ENCODE measurements at regions of chr1 and their contacts with region 1.

Region 1: GRCh38 chr1:24744911-24745710 is at the start of gene CLIC4:
- DNase-seq: peak; percentile 100
- ATAC-seq: peak; percentile 93
- H3K4me3 Mint-ChIP-seq: peak within 1 kb of the TSS; percentile 90
- H3K27ac Mint-ChIP-seq: peak within 1 kb of the TSS; percentile 90
- H3K4me1 Mint-ChIP-seq: peaks cover 44% of the 10 kb centered on the region
- H3K27me3 Mint-ChIP-seq: no peaks in the 10 kb centered on the region
- total RNA-seq, gene CLIC4: 29.8 to 33.1 TPM

Region 2: DNA sequence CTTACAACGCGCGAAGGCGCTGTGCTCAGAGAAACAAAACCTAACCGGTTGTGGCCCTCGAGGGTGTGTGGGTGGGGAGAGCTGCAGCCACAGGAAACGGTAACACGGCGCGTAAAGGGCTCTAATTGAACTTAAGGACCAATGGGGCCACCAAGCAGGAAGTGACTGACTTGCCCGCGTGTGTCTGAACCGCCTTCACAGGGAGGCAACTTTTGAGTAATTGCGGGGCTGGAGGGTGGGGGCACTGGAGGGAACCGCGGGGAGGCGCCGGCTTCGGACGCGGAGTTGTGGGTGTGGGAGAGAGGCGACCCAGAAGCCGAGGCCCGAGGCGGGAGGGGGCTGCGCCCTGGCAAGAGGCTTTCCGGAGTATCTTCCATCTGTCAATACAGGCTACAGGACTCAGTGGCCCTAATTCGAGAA is 786.1 kb before region 1 on chr1:
- CTCF ChIA-PET with region 1: no interaction called
- POLR2A ChIA-PET with region 1: no interaction called
- intact Hi-C with region 1: loop called in 1 of 2 experiments (anchors 1 kb)
- DNase-seq: peak; percentile 97
- ATAC-seq: peak; percentile 82
- H3K4me3 Mint-ChIP-seq: peak overlapping the region; percentile 100
- H3K27ac Mint-ChIP-seq: peak overlapping the region; percentile 100
- H3K4me1 Mint-ChIP-seq: peaks cover 53% of the 10 kb centered on the region
- H3K27me3 Mint-ChIP-seq: no peaks in the 10 kb centered on the region

Region 3: GRCh38 chr1:24415334-24415909 is 329.7 kb before region 1 on chr1 and contains the start of gene NIPAL3:
- CTCF ChIA-PET with region 1: no interaction called
- POLR2A ChIA-PET with region 1: no interaction called
- intact Hi-C with region 1: loop called in 1 of 2 experiments (anchors 1 kb)
- DNase-seq: peak; percentile 99
- ATAC-seq: peak; percentile 94
- H3K4me3 Mint-ChIP-seq: peak within 1 kb of the TSS; percentile 98
- H3K27ac Mint-ChIP-seq: peak within 1 kb of the TSS; percentile 97
- H3K4me1 Mint-ChIP-seq: peaks cover 57% of the 10 kb centered on the region
- H3K27me3 Mint-ChIP-seq: no peaks in the 10 kb centered on the region
- total RNA-seq, gene NIPAL3: 38.1 to 41.4 TPM

Region 4: DNA sequence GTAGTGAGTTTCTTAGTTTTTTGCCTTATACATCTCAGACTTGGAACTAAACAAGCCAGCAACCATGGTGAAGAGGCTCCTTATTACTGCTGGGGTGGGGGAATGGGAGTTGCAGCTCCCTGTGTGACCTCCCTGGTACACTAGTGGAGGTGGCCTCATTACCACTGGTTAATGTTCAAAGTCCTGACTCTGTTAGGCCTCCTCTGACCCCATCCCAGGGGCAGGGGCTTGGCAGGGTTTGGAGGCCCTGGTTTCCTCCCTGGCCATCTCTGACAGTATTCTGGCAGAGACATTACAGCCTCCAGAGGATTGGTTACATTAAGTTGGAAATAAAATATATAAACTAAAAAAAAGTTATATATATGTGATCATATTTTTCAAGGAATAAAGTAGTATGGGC is 45.4 kb after region 1 on chr1:
- CTCF ChIA-PET with region 1: no interaction called
- POLR2A ChIA-PET with region 1: no interaction called
- intact Hi-C with region 1: no loop called
- DNase-seq: no peak
- ATAC-seq: no peak
- H3K4me3 Mint-ChIP-seq: no peak overlapping the region
- H3K27ac Mint-ChIP-seq: no peak overlapping the region
- H3K4me1 Mint-ChIP-seq: no peaks in the 10 kb centered on the region
- H3K27me3 Mint-ChIP-seq: no peaks in the 10 kb centered on the region

Region 5: DNA sequence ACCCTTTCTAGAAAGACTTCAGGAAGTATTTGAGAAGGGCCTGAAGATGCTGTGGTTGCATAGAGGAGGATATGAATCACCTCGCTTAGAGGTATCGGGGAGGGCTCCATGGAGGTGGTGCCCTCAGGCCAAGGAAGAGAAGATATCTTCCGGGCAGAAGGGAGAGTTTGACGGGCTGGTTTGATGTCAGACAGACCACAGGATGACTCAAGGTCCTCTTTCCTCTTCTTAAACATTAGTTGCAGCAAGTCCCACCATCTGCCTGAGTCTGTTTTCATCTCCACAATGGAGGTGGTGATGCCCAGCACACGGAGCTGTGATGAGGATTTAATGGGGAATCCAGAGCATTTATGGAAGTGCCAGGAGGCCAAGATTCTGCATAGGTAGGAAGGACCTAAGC is 210.1 kb after region 1 on chr1:
- CTCF ChIA-PET with region 1: no interaction called
- POLR2A ChIA-PET with region 1: no interaction called
- intact Hi-C with region 1: loop called in 1 of 2 experiments (anchors 1 kb)
- DNase-seq: peak; percentile 89
- ATAC-seq: peak; percentile 85
- H3K4me3 Mint-ChIP-seq: peak overlapping the region; percentile 94
- H3K27ac Mint-ChIP-seq: peak overlapping the region; percentile 99
- H3K4me1 Mint-ChIP-seq: peaks cover 93% of the 10 kb centered on the region
- H3K27me3 Mint-ChIP-seq: no peaks in the 10 kb centered on the region

Region 6: GRCh38 chr1:25054526-25055323 is 309.6 kb after region 1 on chr1:
- CTCF ChIA-PET with region 1: no interaction called
- POLR2A ChIA-PET with region 1: no interaction called
- intact Hi-C with region 1: no loop called
- DNase-seq: no peak
- ATAC-seq: no peak
- H3K4me3 Mint-ChIP-seq: no peak overlapping the region
- H3K27ac Mint-ChIP-seq: no peak overlapping the region
- H3K4me1 Mint-ChIP-seq: no peaks in the 10 kb centered on the region
- H3K27me3 Mint-ChIP-seq: peaks cover 13% of the 10 kb centered on the region

Region 7: DNA sequence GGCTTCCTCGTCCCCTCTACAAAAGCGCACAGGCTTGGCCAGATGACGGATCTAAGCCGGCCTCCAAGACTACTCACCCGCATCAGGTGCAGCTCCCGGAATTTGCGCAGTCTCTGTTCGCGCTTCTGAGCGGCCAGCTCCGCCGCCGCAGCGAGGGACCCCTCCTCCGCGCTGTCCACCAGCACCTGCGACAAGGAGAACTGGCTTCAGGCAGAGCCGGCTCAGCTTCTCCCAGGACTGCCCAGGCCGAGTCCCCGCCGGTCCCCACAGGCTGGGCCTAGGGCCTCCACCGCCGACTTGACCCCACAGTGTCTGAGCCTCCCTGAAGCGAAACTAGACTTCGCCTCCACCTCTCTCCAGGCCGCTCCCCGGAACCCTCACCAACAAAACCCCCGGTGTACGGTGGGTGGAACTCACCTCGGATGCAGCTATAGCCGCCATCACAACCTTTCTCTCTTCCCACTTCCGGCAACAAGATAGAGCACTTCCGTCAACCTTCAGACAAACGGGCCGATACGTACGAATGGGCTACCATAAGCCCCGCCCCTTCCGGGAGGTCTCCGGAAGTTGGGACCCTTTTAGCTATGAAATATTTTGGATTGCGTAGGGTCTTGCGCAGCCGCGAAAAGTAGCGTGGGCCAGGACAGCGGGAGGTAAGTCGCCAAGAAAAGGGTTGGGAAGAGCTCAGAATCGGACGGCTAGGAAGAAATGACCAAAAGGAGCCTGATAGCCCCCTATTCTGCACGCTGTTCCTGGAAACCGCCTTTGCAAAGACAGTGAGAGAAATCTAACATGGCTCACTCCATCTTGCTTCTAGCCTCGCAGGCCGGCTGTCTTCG is 487.1 kb after region 1 on chr1 and contains the start of gene SYF2:
- CTCF ChIA-PET with region 1: no interaction called
- POLR2A ChIA-PET with region 1: interaction called, 4 read pairs
- intact Hi-C with region 1: loop called in 1 of 2 experiments (anchors 1 kb)
- DNase-seq: peak; percentile 92
- ATAC-seq: peak; percentile 92
- H3K4me3 Mint-ChIP-seq: no peak within 1 kb of the TSS
- H3K27ac Mint-ChIP-seq: no peak within 1 kb of the TSS
- H3K4me1 Mint-ChIP-seq: peaks cover 26% of the 10 kb centered on the region
- H3K27me3 Mint-ChIP-seq: no peaks in the 10 kb centered on the region
- total RNA-seq, gene SYF2: 39.0 to 42.4 TPM

Region 8: DNA sequence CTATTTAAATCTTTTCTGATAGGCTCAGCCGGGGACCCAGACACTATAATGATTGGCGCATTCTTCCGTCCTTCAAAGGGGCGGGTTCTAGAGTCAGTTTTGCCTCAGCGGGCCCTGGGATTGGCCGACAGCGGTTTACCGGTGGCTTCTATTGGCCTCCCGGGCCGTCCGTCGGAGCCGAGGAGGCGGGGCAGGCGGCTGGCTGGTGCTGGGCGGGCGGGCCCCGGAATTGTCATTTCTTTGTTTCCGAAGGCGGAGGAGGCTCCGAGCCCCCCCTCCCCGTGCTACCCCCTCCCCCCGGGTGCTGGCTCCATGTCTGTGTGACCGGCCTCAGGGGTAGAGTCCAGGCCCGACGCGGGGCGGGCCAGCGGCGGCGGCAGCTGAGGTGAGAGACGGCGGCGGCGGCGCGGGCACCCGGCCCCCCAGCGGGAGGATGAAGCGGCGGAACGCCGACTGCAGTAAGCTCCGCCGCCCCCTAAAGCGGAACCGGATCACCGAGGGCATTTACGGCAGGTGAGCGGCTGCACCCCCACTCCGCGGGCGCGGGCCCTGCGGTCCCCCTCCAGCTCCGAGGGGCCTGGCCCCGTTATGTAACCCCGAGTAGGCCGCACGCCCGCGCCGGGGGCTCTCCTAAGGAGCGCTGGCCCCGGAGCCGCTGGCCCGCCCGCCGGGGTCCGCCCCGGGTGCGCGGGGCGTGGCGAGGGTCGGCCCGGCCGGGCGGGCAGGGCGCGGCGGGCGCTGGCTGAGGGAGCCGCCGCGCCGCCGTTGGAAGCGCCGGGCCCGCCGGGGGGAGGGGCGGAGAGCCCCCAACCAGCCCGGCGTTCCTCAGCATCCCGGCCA is 685.8 kb after region 1 on chr1 and contains the start of gene MACO1:
- CTCF ChIA-PET with region 1: no interaction called
- POLR2A ChIA-PET with region 1: no interaction called
- intact Hi-C with region 1: loop called in 1 of 2 experiments (anchors 1 kb)
- DNase-seq: peak; percentile 98
- ATAC-seq: peak; percentile 93
- H3K4me3 Mint-ChIP-seq: peak within 1 kb of the TSS; percentile 93
- H3K27ac Mint-ChIP-seq: peak within 1 kb of the TSS; percentile 99
- H3K4me1 Mint-ChIP-seq: peaks cover 47% of the 10 kb centered on the region
- H3K27me3 Mint-ChIP-seq: no peaks in the 10 kb centered on the region
- total RNA-seq, gene MACO1: 15.7 to 18.5 TPM

Region 9: DNA sequence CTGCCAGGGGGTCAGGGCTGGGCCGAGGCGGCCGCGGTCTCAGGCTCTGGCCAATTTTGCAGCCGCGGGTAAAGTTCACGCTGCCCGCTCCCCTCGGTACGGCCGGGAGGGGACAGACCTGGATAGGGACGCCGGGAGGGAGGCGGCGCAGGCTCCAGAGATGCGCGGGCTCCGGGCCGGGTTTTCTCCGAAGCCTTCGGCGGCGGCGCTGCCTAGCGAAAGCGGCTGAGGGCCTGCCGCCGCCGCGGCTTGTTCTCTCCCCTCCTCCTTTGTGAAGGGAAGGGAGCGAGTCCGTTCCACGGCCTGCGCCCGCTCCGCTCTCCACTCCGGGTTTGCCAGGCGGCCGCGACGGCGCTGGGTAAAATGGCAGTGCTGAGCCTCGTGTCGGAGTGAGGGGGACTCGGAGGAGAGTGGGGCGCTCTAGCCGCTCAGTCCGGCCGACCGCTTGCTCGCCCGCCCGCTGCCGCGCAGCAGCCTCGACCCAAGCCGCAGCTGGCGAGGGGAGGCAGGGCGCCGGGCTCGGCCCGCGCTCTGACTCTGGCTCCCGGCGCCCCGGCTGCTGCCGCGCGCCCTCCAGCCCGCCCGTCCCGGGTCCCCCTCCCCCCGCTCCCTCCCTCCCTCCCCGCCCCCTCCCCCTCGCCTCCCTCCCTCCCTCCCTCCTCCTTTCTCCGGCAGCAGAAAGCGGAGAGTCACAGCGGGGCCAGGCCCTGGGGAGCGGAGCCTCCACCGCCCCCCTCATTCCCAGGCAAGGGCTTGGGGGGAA is 1950.4 kb after region 1 on chr1 and contains the start of gene ARID1A:
- CTCF ChIA-PET with region 1: no interaction called
- POLR2A ChIA-PET with region 1: no interaction called
- intact Hi-C with region 1: loop called in 1 of 2 experiments (anchors 10 kb)
- DNase-seq: peak; percentile 97
- ATAC-seq: peak; percentile 55
- H3K4me3 Mint-ChIP-seq: peak within 1 kb of the TSS; percentile 81
- H3K27ac Mint-ChIP-seq: peak within 1 kb of the TSS; percentile 91
- H3K4me1 Mint-ChIP-seq: peaks cover 30% of the 10 kb centered on the region
- H3K27me3 Mint-ChIP-seq: no peaks in the 10 kb centered on the region
- total RNA-seq, gene ARID1A: 73.1 to 112 TPM